ENCODE measurements at regions of chr3 and their contacts with region 1.

Region 1: GRCh38 chr3:183122257-183122932 is 23.1 kb upstream of the MCCC1 start:
- DNase-seq: peak; percentile 60

Region 2: DNA sequence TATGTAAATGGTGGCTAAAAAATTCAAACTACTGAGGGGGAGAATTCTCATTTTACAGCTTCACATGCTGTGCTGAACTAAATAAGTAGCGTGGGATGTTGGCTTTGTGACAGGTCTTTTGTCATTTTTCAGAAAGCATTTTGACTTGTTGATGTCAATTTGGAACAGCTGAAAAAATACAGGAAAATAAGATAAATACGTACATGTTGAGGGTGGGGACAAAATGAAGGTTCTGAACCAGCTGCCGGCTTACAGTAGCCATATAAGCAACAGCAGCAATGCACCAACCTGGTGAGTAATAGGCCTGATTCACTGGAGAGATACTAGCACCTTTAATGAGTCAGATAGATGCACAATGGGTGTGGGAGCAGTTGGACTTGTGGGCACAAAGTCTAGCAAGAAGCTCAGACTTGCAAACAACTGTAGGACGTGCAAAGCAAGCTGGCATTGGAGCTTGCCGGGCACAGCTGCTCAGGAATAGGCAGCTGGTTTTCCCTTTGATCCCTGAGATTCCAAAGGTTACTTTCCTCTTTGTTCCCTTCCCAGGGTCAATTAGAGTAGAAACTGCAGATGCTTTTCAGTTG is 143.5 kb after region 1 on chr3:
- in situ Hi-C with region 1: no loop called
- DNase-seq: no peak

Region 3: DNA sequence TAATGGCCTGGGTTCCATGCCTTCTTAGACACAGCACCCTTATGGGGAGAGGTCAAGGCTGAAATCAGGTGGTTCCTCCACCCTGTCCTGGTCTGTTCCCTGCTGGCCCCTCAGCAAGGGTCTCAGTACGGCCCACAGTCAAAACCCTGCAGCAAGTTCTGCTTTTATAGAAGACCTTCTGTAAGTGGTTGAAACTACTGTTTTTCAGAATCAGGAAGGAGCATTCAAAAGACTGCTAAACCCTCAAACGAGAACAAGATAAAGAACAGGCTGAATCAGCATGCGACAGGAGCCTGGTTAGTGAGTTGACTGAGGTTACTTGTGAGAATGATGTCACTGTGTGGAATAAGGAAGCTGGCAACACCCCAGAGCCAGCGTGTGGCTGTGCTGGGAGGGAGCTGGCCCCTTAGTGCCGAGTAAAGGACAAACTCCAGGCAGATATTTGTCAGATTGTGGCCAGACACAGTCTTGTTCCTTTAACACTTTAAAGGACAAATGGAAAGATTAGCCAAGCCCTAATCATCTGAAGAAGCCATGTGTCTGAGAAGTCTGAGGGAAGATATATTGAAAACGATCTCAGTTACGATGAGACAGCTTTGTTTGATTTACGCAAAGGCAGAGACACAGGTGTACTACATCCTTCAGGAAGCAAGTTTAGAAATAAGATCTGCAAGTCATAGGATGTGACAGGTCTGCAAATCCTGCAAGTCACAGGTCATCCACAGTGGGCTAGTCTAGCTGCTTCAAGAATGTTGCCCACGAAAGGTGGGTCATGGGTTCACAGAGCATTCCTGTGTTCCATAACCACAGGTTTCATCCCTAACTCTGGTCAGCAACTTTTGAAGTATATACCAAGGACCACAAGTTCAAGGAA is 184.6 kb after region 1 on chr3:
- in situ Hi-C with region 1: loop called (anchors 25 kb)
- DNase-seq: no peak